ENCODE measurements at regions of chr2 and their contacts with region 1.

Region 1: DNA sequence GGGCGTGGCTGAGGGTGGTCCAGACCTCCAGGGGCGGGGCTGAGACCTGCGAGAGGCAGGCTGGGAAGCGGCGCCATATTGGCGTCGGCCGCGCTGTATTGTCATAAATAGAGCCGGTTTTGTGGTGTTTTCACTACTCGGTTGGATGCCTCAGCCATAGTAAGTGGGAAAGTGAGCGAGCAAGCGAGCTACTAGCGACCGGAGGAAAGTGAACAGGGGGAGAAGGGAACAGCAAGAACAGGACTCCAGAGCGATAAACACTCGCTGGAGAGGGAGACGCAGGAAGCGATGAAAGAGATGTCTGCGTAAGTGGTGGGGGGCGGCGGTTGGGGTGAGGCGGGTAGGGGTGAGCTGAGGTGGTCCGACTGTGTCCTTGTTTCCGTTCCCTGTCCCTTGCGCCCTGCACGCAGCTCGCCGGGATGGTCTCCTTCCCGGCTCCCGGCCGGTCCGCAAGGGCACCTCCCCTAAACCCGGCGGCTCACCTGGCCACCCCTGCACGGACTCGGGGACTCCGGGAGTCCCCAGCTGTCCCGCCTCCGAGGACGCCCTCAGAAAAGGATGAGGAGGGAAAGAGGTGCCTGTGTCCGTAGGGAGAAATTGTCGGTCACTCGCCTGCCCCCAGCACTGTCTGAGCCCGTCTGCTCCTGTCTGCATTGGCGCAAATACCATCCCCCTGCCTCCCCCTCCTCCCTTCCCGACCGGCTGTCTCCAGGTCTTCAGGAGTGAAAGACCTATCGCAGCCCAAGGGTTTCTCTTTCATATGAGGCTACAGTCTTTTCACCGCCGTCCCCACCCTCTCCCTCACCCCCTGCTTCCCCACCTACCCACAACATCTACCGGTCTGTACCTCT is at the start of gene PAPOLG:
- DNase-seq: peak; percentile 94
- H3K4me3 Mint-ChIP-seq: peak within 1 kb of the TSS; percentile 99
- H3K27ac Mint-ChIP-seq: peak within 1 kb of the TSS; percentile 99
- H3K4me1 Mint-ChIP-seq: peaks cover 31% of the 10 kb centered on the region
- H3K27me3 Mint-ChIP-seq: no peaks in the 10 kb centered on the region
- total RNA-seq, gene PAPOLG: 17.2 and 22.2 TPM in 2 replicates

Region 2: DNA sequence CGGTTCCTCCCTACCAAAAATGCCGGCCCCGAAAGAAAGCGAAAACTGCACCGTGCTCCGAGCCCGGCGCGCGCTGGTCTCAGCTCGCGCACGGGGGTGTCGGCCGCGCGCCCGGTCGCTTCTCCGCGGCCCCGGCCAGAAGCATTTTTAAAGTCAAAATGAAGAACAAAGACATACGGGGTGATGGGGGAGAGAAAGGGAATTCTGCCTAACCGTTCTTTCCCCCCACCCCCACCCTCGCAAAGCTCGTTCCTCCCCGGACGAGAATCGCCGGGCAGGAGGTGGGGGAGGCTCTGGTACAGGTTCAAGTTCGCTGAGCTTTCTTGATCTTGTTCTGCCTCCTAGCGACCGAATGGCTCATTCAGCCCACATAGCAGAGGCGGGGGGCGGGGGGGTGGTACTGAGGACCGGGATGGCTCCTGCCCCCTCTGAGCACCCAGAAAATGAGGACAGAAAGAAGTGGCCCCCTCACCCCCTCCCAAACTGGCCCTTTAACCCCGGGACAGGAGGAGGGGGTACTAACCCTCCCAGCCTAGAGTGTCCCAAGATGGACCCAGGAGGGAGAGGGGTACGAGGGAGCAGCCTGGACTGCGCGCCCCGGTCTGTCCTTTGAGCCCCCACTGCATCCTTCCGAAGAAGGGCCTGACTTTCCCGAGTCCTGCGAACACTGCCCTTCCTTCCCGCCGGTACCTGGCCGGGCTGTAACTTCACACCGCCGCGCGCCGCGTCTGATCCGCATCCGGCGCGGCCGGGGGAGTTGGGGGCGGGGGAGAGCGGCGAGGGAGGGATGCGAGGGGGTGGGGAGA is 206.0 kb before region 1 on chr2:
- intact Hi-C with region 1: loop called (anchors 5 kb)
- DNase-seq: no peak
- H3K4me3 Mint-ChIP-seq: peak overlapping the region; percentile 80
- H3K27ac Mint-ChIP-seq: peak overlapping the region; percentile 29
- H3K4me1 Mint-ChIP-seq: peaks cover 20% of the 10 kb centered on the region
- H3K27me3 Mint-ChIP-seq: peaks cover 76% of the 10 kb centered on the region

Region 3: GRCh38 chr2:60707750-60708371 is 48.6 kb before region 1 on chr2:
- intact Hi-C with region 1: loop called (anchors 1 kb)
- DNase-seq: no peak
- H3K4me3 Mint-ChIP-seq: no peak overlapping the region
- H3K27ac Mint-ChIP-seq: no peak overlapping the region
- H3K4me1 Mint-ChIP-seq: no peaks in the 10 kb centered on the region
- H3K27me3 Mint-ChIP-seq: no peaks in the 10 kb centered on the region

Region 4: GRCh38 chr2:60794277-60794863 is 38.0 kb after region 1 on chr2:
- intact Hi-C with region 1: loop called (anchors 1 kb)
- DNase-seq: no peak
- H3K4me3 Mint-ChIP-seq: no peak overlapping the region
- H3K27ac Mint-ChIP-seq: no peak overlapping the region
- H3K4me1 Mint-ChIP-seq: peaks cover 16% of the 10 kb centered on the region
- H3K27me3 Mint-ChIP-seq: no peaks in the 10 kb centered on the region

Region 5: DNA sequence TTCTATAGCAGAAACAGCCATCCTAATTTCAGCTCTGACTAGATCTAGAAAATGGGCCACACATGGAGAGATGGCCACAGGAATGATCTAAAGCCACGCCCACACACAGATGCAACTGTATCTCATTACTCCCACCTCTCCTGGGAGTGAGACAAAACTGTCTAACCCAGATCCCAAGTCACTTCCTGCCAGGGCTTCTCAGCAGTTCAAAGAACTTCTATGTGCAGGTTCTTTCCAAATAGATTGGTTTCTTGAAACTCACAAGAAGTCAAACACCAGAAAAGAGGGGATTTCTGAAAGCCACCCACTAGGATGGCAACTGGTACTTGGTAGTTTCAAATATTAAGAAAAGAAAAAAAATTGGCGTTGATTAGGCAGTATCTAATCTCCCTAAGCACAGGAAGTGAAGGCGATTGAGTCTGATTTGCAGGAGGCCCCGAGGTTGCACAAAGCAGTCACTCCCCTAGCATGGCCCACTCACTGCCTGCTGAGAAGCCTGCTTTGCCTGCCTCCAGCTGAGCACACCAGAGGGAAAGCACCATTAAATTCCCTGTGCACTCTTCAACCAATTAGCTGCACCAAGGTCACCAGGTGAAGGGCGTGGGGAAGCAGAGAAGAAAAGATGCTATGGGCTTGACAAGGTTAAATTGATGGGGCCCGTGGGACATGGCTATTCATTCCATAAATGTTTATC is 50.7 kb after region 1 on chr2:
- intact Hi-C with region 1: no loop called
- DNase-seq: no peak
- H3K4me3 Mint-ChIP-seq: peak overlapping the region; percentile 32
- H3K27ac Mint-ChIP-seq: peak overlapping the region; percentile 83
- H3K4me1 Mint-ChIP-seq: peaks cover 46% of the 10 kb centered on the region
- H3K27me3 Mint-ChIP-seq: no peaks in the 10 kb centered on the region

Region 6: DNA sequence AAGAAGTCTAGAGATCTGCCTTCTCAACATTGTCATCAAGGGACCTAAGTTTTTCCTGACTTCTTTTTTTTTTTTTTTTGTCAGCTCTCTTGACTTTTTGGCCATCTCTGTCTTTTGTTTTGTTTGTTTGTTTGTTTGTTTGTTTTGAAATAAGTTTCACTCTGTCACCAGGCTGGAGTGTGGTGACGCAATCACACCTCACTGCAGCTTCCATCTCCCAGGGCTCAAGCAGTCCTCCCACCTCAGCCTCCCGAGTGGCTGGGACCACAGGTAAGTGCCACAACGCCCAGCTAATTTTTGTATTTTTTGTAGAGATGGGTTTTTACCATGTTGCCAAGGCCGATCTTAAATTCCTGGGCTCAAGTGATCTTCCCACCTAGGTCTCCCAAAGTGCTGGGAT is 267.3 kb after region 1 on chr2:
- intact Hi-C with region 1: no loop called
- DNase-seq: no peak
- H3K4me3 Mint-ChIP-seq: no peak overlapping the region
- H3K27ac Mint-ChIP-seq: no peak overlapping the region
- H3K4me1 Mint-ChIP-seq: peaks cover 15% of the 10 kb centered on the region
- H3K27me3 Mint-ChIP-seq: no peaks in the 10 kb centered on the region

Region 7: GRCh38 chr2:61065715-61066709 is 309.6 kb after region 1 on chr2 and contains the start of gene SANBR:
- intact Hi-C with region 1: loop called (anchors 2 kb)
- DNase-seq: peak; percentile 85
- H3K4me3 Mint-ChIP-seq: peak within 1 kb of the TSS; percentile 92
- H3K27ac Mint-ChIP-seq: peak within 1 kb of the TSS; percentile 87
- H3K4me1 Mint-ChIP-seq: peaks cover 16% of the 10 kb centered on the region
- H3K27me3 Mint-ChIP-seq: peaks cover 5% of the 10 kb centered on the region
- total RNA-seq, gene SANBR: 2.0 and 2.2 TPM in 2 replicates

Region 8: GRCh38 chr2:61262699-61263098 is 506.3 kb after region 1 on chr2:
- intact Hi-C with region 1: no loop called
- DNase-seq: no peak
- H3K4me3 Mint-ChIP-seq: no peak overlapping the region
- H3K27ac Mint-ChIP-seq: no peak overlapping the region
- H3K4me1 Mint-ChIP-seq: no peaks in the 10 kb centered on the region
- H3K27me3 Mint-ChIP-seq: no peaks in the 10 kb centered on the region

Region 9: DNA sequence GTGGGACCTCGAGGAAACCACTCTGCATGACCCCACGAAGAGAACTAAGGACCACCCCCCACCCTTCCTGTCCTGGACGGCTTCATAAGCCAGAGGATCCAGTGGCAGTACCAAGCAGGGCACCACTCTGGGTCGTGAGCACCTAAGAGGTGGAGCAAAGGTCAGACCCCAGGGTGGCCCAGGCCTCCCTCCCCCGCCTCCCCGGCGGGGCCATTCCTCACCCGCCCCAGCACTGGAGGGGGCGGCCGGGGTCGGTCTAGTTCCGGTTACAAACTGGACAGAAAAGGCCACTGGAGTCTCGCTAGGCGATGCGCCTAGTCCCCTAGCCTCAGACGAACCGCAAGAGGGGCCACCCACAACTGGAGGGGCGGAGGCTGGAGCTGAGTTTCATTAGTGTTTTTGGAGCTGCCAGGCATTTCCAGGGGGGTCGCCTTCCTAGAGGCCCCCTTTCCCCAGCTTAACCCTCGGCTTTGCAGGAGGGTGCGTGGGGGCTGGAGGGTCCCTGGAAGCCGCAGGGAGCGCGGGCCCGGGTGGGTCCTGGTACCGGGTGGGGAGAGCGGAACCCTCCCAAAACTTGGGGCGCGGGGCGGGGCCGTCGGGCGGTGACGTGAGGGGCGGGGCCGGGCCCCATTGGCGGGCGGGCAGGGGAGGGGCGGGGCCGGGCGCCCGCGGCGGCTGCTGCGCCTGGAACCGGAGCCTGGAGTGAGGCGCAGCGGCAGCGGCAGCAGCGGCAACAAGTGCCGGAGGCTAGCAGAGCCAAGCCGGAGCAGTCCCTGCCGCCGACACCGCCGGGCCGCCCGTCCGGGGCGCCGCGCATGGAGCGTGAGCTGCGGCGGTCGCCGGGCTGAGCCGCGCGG is 1439.2 kb after region 1 on chr2 and contains the start of gene B3GNT2:
- intact Hi-C with region 1: loop called (anchors 5 kb)
- DNase-seq: peak; percentile 75
- H3K4me3 Mint-ChIP-seq: peak within 1 kb of the TSS; percentile 87
- H3K27ac Mint-ChIP-seq: peak within 1 kb of the TSS; percentile 89
- H3K4me1 Mint-ChIP-seq: peaks cover 36% of the 10 kb centered on the region
- H3K27me3 Mint-ChIP-seq: no peaks in the 10 kb centered on the region
- total RNA-seq, gene B3GNT2: 32.8 and 37.3 TPM in 2 replicates

Measured in activated T-helper 1 cell treated with anti-CD3 and anti-CD28 coated beads, Interleukin-12 subunit alpha, Interleukin-12 subunit beta, Interleukin-2, Interleukin-4 antibody, amounts not matched to agents 30 ng/mL and 10 ng/mL and 1 ng/mL, durations not matched to agents 14 hours and 24 hours and 36 hours (primary cell).